Sciatic nerve (tissue), 2 donors: ENCODE measurements at regions of chr2 and their contacts with region 1.

Region 1: DNA sequence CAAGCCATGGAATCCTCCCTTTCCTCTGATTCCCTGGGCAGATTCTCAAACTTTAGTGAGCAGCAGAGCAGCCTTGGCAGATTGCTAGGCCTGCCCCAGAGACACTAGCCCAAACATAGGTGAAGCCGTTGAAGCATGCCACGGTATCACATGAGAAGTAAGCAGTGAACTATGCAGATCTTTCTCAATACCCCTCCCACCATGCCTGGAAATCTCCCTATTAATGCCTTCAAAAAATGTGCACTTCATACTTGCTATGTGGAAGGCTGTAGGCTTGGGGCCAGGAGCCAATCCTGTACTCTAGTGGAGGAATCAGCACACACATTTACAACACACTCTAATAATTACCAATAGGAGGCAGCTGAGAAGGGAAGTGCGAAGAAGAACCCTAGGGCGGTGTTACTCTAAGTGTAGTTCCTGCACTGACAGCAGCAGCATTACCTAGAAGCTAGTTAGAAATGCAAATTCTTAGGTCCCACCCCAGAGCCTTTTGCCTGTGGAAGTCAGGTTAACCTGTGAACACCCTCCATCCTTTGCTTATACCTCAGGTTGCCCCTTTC is 305.1 kb upstream of the SPRED2 start:
- DNase-seq: no peak
- ATAC-seq: no peak

Region 2: GRCh38 chr2:65595641-65596040 is 141.9 kb before region 1 on chr2:
- intact Hi-C with region 1: no loop called
- DNase-seq: no peak
- ATAC-seq: no peak

Region 3: GRCh38 chr2:66390811-66391210 is 653.3 kb after region 1 on chr2:
- intact Hi-C with region 1: loop called (anchors 5 kb)
- DNase-seq: no peak
- ATAC-seq: no peak

Region 4: DNA sequence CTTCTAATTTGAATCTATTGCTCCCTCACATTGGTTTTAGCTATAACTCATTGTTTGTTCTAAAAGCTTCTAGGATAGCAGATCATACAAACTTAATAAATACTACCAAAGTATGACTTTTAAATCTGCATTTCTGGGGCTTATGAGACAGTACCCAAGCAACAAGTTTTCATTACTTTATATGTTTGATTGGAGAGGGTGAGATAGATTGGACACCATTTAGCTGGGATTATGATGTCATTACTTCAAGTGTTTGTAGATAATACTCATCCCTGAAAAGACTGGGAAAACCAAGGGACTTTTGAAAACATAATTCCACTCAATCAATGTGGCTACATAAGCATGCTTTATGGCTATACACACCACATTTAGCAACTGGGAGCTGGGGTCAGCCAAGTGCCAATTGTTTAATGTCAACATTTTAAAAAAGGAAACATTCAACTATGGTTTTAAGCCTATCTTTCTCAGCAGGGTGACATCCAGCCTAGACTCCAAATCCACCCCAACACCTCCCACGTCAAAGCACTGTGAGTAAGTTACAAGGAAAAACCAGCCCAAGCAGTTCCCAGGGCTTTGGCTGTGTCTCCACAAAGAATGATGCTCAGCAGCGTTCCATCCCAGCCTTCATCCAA is 1779.5 kb after region 1 on chr2:
- intact Hi-C with region 1: no loop called
- DNase-seq: no peak
- ATAC-seq: no peak